Activated T-helper 2 cell treated with anti-CD3 and anti-CD28 coated beads, Interferon-gamma antibody, Interleukin-2, Interleukin-4, amounts not matched to agents 10 μg/mL and 5 μg/mL and 100 μg/mL, durations not matched to agents 14 hours and 24 hours and 36 hours (primary cell): ENCODE measurements at regions of chr1 and their contacts with region 1.

Region 1: DNA sequence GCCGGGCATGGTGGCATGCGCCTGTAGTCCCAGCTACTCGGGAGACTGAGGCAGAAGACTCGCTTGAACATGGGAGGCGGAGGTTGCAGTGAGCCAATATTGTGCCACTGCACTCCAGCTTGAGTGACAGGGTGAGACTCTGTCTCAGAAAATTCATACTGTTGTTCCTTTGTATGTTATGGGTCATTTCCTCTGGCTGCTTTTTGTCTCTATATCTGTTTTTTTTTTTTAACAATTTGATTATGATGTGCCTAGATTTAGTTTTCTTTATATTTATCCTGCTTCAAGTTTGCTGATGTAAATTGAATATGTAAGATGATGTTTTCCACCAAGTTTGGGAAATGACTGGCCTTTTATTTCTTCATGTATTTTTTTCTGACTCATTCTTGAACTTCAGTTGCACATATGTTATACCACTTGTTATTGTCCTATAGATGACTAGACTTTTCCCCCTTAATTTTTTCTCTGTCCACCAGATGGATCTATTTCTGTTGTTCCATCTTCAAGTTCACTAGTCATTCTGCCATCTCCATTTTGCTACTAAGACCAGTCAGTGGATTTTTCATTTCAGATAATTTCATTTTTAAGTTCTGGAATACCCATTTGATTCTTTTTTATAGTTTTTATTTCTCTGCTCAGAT is 173.5 kb downstream of the GALNT2 start:
- DNase-seq: no peak
- H3K4me3 Mint-ChIP-seq: no peak overlapping the region
- H3K27ac Mint-ChIP-seq: peak overlapping the region; percentile 85
- H3K4me1 Mint-ChIP-seq: peaks cover 35% of the 10 kb centered on the region
- H3K27me3 Mint-ChIP-seq: no peaks in the 10 kb centered on the region

Region 2: GRCh38 chr1:229999004-229999670 is 241.4 kb before region 1 on chr1:
- intact Hi-C with region 1: no loop called
- DNase-seq: no peak
- H3K4me3 Mint-ChIP-seq: no peak overlapping the region
- H3K27ac Mint-ChIP-seq: no peak overlapping the region
- H3K4me1 Mint-ChIP-seq: peaks cover 3% of the 10 kb centered on the region
- H3K27me3 Mint-ChIP-seq: peaks cover 11% of the 10 kb centered on the region

Region 3: GRCh38 chr1:230149751-230150584 is 90.6 kb before region 1 on chr1:
- intact Hi-C with region 1: no loop called
- DNase-seq: no peak
- H3K4me3 Mint-ChIP-seq: no peak overlapping the region
- H3K27ac Mint-ChIP-seq: no peak overlapping the region
- H3K4me1 Mint-ChIP-seq: peaks cover 16% of the 10 kb centered on the region
- H3K27me3 Mint-ChIP-seq: no peaks in the 10 kb centered on the region

Region 4: GRCh38 chr1:230251644-230252191 is 11.2 kb after region 1 on chr1:
- intact Hi-C with region 1: loop called (anchors 1 kb)
- DNase-seq: no peak
- H3K4me3 Mint-ChIP-seq: no peak overlapping the region
- H3K27ac Mint-ChIP-seq: peak overlapping the region; percentile 85
- H3K4me1 Mint-ChIP-seq: peaks cover 19% of the 10 kb centered on the region
- H3K27me3 Mint-ChIP-seq: no peaks in the 10 kb centered on the region

Region 5: DNA sequence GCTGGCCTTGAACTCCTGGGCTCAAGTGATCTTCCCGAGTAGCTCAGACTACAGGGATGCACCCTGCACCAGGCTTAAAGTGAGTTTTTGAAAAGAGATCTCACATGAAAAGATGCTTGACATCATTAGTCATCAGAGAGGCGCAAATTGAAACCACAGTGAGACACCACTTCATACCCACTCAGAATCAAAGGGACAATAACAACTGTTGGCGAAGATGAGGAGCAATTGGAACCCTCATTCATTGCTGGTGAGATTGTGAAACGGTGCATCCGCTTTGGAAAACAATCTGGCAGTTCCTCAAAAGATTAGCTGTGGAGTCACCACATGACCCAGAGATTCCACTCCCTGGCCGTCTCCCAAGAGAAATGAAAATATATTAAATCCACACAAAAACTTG is 63.3 kb after region 1 on chr1:
- intact Hi-C with region 1: loop called (anchors 1 kb)
- DNase-seq: no peak
- H3K4me3 Mint-ChIP-seq: no peak overlapping the region
- H3K27ac Mint-ChIP-seq: peak overlapping the region; percentile 4
- H3K4me1 Mint-ChIP-seq: peaks cover 24% of the 10 kb centered on the region
- H3K27me3 Mint-ChIP-seq: no peaks in the 10 kb centered on the region